Left lung (tissue), 14 donors: ENCODE measurements at regions of chr1 and their contacts with region 1.

Region 1: GRCh38 chr1:62131093-62131725 is 63.4 kb upstream of the L1TD1 start:
- DNase-seq: peak in 2 of 4 donors; percentile 22 to 55
- ATAC-seq: peak; percentile 91
- H3K4me3 ChIP-seq: no peak overlapping the region
- H3K27ac ChIP-seq: no peak overlapping the region
- H3K4me1 ChIP-seq: no peaks in the 10 kb centered on the region
- H3K27me3 ChIP-seq: no peaks in the 10 kb centered on the region
- CTCF ChIP-seq: peak; percentile 72 to 89

Region 2: GRCh38 chr1:61864489-61864888 is 266.7 kb before region 1 on chr1:
- intact Hi-C with region 1: no loop called
- DNase-seq: no peak
- ATAC-seq: no peak
- H3K4me3 ChIP-seq: no peak overlapping the region
- H3K27ac ChIP-seq: no peak overlapping the region
- H3K4me1 ChIP-seq: no peaks in the 10 kb centered on the region
- H3K27me3 ChIP-seq: no peaks in the 10 kb centered on the region
- CTCF ChIP-seq: no peak

Region 3: DNA sequence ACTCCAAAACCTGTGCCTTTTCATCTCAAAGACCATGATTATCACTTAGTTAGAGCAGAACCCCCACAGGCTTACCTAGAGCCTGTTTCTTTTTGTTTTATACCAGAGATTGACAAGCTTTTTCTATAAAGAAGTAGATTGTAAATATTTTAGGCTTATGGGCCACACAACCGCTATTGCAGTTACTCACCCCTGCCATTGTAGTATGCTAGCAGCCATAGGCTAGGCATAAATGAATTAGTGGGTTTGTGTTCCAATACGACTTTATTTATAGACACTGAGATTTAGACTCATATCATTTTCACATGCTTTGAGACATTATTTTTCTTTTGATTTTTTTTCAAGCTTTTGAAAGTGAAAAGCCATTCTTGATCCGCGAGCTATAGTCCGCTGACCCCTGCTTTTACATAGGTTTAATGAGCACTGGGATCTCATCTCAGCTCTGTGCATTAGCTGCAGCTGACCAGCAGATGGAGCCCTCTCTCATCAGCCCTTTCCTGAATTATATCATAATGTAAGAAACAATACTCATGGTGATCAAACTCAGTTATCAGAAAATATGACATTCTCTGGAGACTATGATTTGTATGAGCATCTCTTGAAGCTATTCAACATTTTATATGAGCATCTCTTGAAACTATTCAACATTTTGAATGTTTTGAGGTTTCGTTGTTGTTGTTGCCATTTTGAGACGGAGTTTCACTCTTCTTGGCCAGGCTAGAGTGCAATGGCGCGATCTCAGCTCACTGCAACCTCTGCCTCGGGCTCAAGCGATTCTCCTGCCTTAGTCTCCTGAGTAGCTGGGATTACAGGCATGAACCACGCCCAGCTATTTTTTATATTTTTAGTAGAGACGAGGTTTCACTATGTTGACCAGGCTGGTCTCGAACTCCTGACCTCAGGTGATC is 48.5 kb before region 1 on chr1:
- intact Hi-C with region 1: loop called in 1 of 2 experiments (anchors 10 kb)
- DNase-seq: peak in 1 of 4 donors; percentile 38
- ATAC-seq: peak; percentile 88
- H3K4me3 ChIP-seq: no peak overlapping the region
- H3K27ac ChIP-seq: no peak overlapping the region
- H3K4me1 ChIP-seq: no peaks in the 10 kb centered on the region
- H3K27me3 ChIP-seq: no peaks in the 10 kb centered on the region
- CTCF ChIP-seq: peak; percentile 77 to 94